HepG2 (cell line): ENCODE measurements at regions of chr1 and their contacts with region 1.

Region 1: DNA sequence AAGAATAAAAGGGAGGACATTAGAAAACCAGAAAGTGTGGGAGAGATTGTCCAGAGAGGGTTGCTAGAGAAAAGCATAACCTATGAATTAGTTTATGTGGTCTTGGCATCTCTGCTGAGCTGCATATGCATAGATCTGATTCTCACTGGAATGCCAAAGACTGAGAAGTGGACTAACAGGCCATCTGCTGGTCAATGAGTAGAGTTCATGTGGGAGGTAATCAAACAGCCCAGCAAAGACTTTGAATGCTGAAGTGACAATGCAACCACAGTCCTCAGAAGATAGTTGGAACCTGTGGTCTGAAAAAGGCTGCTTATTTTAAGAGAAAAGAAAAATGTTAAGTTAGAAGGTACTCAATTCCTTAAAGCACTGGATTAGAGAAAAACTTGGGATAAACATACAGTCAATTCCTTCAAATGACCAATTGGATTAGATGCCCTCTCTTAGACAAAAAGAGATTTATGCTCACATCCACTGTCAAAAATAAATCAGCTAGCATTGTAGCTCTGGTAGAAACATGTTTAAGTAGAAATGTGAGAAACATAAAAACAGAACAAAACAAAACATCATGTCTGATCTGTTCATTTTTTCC is 382.8 kb downstream of the AMY1C start:
- DNase-seq: peak; percentile 28
- ATAC-seq: peak; percentile 93
- H3K4me3 ChIP-seq: no peak overlapping the region
- H3K27ac ChIP-seq: no peak overlapping the region
- H3K4me1 ChIP-seq: no peaks in the 10 kb centered on the region
- H3K27me3 ChIP-seq: no peaks in the 10 kb centered on the region
- CTCF ChIP-seq: peak; percentile 64
- EP300 ChIP-seq: no peak
- POLR2A ChIP-seq: no peak
- RAD21 ChIP-seq: no peak

Region 2: DNA sequence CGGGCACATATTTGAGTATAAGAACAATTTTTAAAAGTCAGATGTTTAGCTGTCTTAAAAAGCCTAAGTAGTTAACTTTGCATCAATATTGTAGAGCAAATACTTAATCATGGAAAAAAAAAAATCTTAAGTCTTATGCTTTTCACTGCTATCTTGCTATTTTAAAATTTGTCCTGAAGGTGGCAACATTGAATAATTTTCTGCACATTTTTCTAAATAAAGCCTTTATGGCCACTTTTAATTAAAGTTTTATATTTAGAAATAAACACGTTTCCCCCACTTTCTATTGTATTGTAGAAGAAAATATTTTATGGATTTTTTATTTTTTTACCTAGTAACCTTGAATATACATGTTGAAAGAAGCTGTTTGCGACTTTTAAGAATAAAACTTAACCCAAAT is 184.0 kb before region 1 on chr1:
- CTCF ChIA-PET with region 1: no interaction called
- POLR2A ChIA-PET with region 1: no interaction called
- in situ Hi-C with region 1: loop called (anchors 10 kb)
- intact Hi-C with region 1: loop called (anchors 1 kb)
- DNase-seq: no peak
- ATAC-seq: no peak
- H3K4me3 ChIP-seq: no peak overlapping the region
- H3K27ac ChIP-seq: no peak overlapping the region
- H3K4me1 ChIP-seq: no peaks in the 10 kb centered on the region
- H3K27me3 ChIP-seq: no peaks in the 10 kb centered on the region
- CTCF ChIP-seq: no peak
- EP300 ChIP-seq: no peak
- POLR2A ChIP-seq: no peak
- RAD21 ChIP-seq: no peak

Region 3: GRCh38 chr1:104105466-104105865 is 27.0 kb before region 1 on chr1:
- CTCF ChIA-PET with region 1: no interaction called
- POLR2A ChIA-PET with region 1: no interaction called
- in situ Hi-C with region 1: no loop called
- intact Hi-C with region 1: loop called (anchors 1 kb)
- DNase-seq: no peak
- ATAC-seq: no peak
- H3K4me3 ChIP-seq: no peak overlapping the region
- H3K27ac ChIP-seq: no peak overlapping the region
- H3K4me1 ChIP-seq: no peaks in the 10 kb centered on the region
- H3K27me3 ChIP-seq: no peaks in the 10 kb centered on the region
- CTCF ChIP-seq: no peak
- EP300 ChIP-seq: no peak
- POLR2A ChIP-seq: no peak
- RAD21 ChIP-seq: no peak

Region 4: GRCh38 chr1:104172243-104172708 is 39.8 kb after region 1 on chr1:
- CTCF ChIA-PET with region 1: no interaction called
- POLR2A ChIA-PET with region 1: no interaction called
- in situ Hi-C with region 1: no loop called
- intact Hi-C with region 1: no loop called
- DNase-seq: no peak
- ATAC-seq: no peak
- H3K4me3 ChIP-seq: no peak overlapping the region
- H3K27ac ChIP-seq: no peak overlapping the region
- H3K4me1 ChIP-seq: no peaks in the 10 kb centered on the region
- H3K27me3 ChIP-seq: no peaks in the 10 kb centered on the region
- CTCF ChIP-seq: no peak
- EP300 ChIP-seq: no peak
- POLR2A ChIP-seq: no peak
- RAD21 ChIP-seq: no peak